HepG2 (cell line): ENCODE measurements at regions of chr2 and their contacts with region 1.

Region 1: GRCh38 chr2:111111101-111111755 is 9.5 kb upstream of the BCL2L11 start:
- DNase-seq: no peak
- ATAC-seq: no peak
- H3K4me3 ChIP-seq: no peak overlapping the region
- H3K27ac ChIP-seq: no peak overlapping the region
- H3K4me1 ChIP-seq: no peaks in the 10 kb centered on the region
- H3K27me3 ChIP-seq: peaks cover 0 to 18% of the 10 kb centered on the region in 2 experiments; a peak in 4 of 5 replicates
- CTCF ChIP-seq: no peak
- EP300 ChIP-seq: no peak
- POLR2A ChIP-seq: no peak
- RAD21 ChIP-seq: no peak

Region 2: GRCh38 chr2:111178730-111179405 is 67.6 kb after region 1 on chr2:
- CTCF ChIA-PET with region 1: no interaction called
- POLR2A ChIA-PET with region 1: no interaction called
- in situ Hi-C with region 1: no loop called
- intact Hi-C with region 1: loop called (anchors 5 kb)
- DNase-seq: peak; percentile 94
- ATAC-seq: peak; percentile 85
- H3K4me3 ChIP-seq: peak overlapping the region in 2 of 3 experiments; percentile 8 to 56; a peak in 3 of 6 replicates
- H3K27ac ChIP-seq: peak overlapping the region; percentile 71
- H3K4me1 ChIP-seq: peaks cover 49% of the 10 kb centered on the region
- H3K27me3 ChIP-seq: 0 out of 5 replicates have a peak, but pooled peaks cover 0 to 3% of the 10 kb centered on the region in 2 experiments
- CTCF ChIP-seq: peak; percentile 28
- EP300 ChIP-seq: peak in 1 of 2 experiments; percentile 7; a peak in 1 of 4 replicates
- POLR2A ChIP-seq: peak in 1 of 2 experiments; percentile 37; a peak in 1 of 4 replicates
- RAD21 ChIP-seq: peak; percentile 43; the same call in 1 of the 2 replicates